ENCODE measurements at regions of chr7 and their contacts with region 1.

Region 1: DNA sequence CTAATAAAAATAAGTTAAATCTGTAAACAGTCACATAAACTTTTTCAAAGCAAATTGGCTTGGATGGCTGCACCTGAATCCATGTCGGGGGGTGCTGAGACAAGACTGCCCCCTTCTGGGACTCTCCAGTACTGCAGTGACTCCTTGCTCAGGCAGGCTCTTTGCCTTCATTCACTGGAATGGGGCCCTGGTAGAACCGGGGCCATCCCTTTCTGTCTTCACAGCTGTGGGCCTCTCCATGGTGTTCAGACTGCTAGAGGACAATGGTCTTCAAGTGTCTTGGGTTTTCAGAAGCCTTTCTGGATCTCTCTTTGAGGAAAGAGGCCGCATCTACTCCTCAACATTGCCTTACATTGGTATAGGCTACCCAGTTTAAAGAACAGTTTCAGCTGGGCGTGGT is 16.1 kb upstream of the IMPDH1 start:
- DNase-seq: peak; percentile 62 to 88 (median 74)
- ATAC-seq: peak; percentile 92
- H3K4me3 ChIP-seq: no peak overlapping the region
- H3K4me3 Mint-ChIP-seq: no peak overlapping the region
- H3K27ac ChIP-seq: no peak overlapping the region
- H3K27ac Mint-ChIP-seq: no peak overlapping the region
- H3K4me1 ChIP-seq: peaks cover 8% of the 10 kb centered on the region
- H3K4me1 Mint-ChIP-seq: no peaks in the 10 kb centered on the region
- H3K27me3 ChIP-seq: peaks cover 0 to 5% of the 10 kb centered on the region in 2 experiments
- H3K27me3 Mint-ChIP-seq: peaks cover 6% of the 10 kb centered on the region
- CTCF ChIP-seq: peak; percentile 94

Region 2: GRCh38 chr7:128387216-128388144 is 38.4 kb before region 1 on chr7:
- CTCF ChIA-PET with region 1: interaction called, 14 read pairs
- POLR2A ChIA-PET with region 1: no interaction called
- intact Hi-C with region 1: no loop called
- DNase-seq: peak; percentile 42 to 80 (median 58)
- ATAC-seq: peak; percentile 93
- H3K4me3 ChIP-seq: no peak overlapping the region
- H3K4me3 Mint-ChIP-seq: no peak overlapping the region
- H3K27ac ChIP-seq: no peak overlapping the region
- H3K27ac Mint-ChIP-seq: no peak overlapping the region
- H3K4me1 ChIP-seq: peaks cover 5% of the 10 kb centered on the region
- H3K4me1 Mint-ChIP-seq: no peaks in the 10 kb centered on the region
- H3K27me3 ChIP-seq: peaks cover 0 to 5% of the 10 kb centered on the region in 2 experiments
- H3K27me3 Mint-ChIP-seq: no peaks in the 10 kb centered on the region
- CTCF ChIP-seq: peak; percentile 82

Region 3: GRCh38 chr7:128398016-128398840 is 27.6 kb before region 1 on chr7:
- CTCF ChIA-PET with region 1: interaction called, 55 read pairs
- POLR2A ChIA-PET with region 1: interaction called, 3 read pairs
- intact Hi-C with region 1: loop called (anchors 1 kb)
- DNase-seq: peak in 12 of 14 experiments; percentile 26 to 63 (median 35)
- ATAC-seq: peak; percentile 68
- H3K4me3 ChIP-seq: no peak overlapping the region
- H3K4me3 Mint-ChIP-seq: no peak overlapping the region
- H3K27ac ChIP-seq: no peak overlapping the region
- H3K27ac Mint-ChIP-seq: no peak overlapping the region
- H3K4me1 ChIP-seq: peaks cover 2% of the 10 kb centered on the region
- H3K4me1 Mint-ChIP-seq: peaks cover 5% of the 10 kb centered on the region
- H3K27me3 ChIP-seq: no peaks in the 10 kb centered on the region
- H3K27me3 Mint-ChIP-seq: no peaks in the 10 kb centered on the region
- CTCF ChIP-seq: peak; percentile 98

Region 4: DNA sequence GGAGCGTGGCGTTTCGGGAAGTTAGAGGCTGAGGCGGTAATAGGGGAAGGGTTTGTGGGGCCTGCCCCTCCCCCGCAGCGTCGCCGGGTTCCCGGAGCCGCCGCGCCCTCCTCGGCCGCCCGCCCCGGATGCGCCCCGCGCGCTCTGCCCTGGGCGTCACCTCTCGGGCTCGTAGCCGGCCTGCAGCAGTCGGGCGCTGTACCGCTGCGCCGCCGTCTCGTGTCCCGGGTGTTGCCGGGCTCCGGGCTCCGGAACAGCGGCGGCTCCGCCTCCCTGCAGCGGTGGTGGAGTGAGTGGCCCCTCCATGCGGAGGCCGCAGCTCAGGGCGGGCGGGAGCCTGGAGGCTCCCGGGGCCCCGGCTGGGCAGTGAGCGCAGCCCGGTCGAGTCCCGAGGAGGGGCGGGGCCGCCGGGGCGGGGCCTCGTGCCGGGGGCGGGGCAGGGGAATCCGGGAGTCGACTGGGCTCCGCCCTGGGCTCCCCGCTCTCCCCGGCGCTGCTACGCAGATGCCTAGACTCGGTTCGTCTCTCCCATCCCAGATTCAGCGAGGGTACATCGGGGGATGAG is 16.2 kb before region 1 on chr7 and contains the start of gene IMPDH1:
- CTCF ChIA-PET with region 1: interaction called, 28 read pairs
- POLR2A ChIA-PET with region 1: interaction called, 3 read pairs
- intact Hi-C with region 1: no loop called
- DNase-seq: peak; percentile 65 to 91 (median 85)
- ATAC-seq: peak; percentile 72
- H3K4me3 ChIP-seq: peak within 1 kb of the TSS; percentile 95
- H3K4me3 Mint-ChIP-seq: peak within 1 kb of the TSS; percentile 92
- H3K27ac ChIP-seq: peak within 1 kb of the TSS; percentile 66 to 85
- H3K27ac Mint-ChIP-seq: peak within 1 kb of the TSS; percentile 86
- H3K4me1 ChIP-seq: peaks cover 52% of the 10 kb centered on the region
- H3K4me1 Mint-ChIP-seq: peaks cover 44% of the 10 kb centered on the region
- H3K27me3 ChIP-seq: no peaks in the 10 kb centered on the region
- H3K27me3 Mint-ChIP-seq: no peaks in the 10 kb centered on the region
- CTCF ChIP-seq: no peak
- total RNA-seq, gene IMPDH1: 26.5 to 27.0 TPM

Region 5: DNA sequence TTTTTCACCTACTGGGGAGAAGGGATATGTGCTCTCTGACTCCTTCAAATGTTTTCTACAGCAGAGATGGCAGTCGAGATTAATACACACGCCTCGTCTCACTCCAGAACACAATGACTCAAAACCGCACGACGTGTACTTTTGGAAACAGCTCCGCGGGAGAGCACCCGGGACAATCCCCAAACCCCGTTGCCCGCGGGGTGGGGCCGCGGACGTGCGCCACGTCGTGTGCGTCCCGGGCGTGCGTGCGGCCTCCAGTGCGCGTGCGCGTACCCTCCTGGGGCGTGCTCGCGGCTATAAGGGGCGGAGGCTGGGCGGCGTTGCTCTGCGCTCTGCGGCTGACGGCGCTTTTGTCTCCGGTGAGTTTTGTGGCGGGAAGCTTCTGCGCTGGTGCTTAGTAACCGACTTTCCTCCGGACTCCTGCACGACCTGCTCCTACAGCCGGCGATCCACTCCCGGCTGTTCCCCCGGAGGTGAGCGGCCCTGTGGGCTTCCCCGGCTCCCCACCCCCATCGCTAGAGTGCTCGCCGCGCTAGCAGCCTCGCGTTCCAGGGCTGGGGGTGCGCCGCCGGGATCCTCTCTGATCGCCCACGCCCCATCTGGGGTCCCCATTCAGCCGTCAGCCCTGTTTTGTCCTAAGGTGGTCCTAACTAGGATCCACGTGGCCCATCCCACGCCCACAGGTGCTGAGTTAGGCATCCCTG is 29.9 kb after region 1 on chr7 and contains the start of gene HILPDA:
- CTCF ChIA-PET with region 1: interaction called, 162 read pairs
- POLR2A ChIA-PET with region 1: interaction called, 16 read pairs
- intact Hi-C with region 1: loop called (anchors 1 kb)
- DNase-seq: peak; percentile 86 to 99 (median 92)
- ATAC-seq: peak; percentile 88
- H3K4me3 ChIP-seq: peak within 1 kb of the TSS; percentile 76
- H3K4me3 Mint-ChIP-seq: peak within 1 kb of the TSS; percentile 90
- H3K27ac ChIP-seq: peak within 1 kb of the TSS; percentile 62 to 67
- H3K27ac Mint-ChIP-seq: peak within 1 kb of the TSS; percentile 88
- H3K4me1 ChIP-seq: peaks cover 28% of the 10 kb centered on the region
- H3K4me1 Mint-ChIP-seq: peaks cover 22% of the 10 kb centered on the region
- H3K27me3 ChIP-seq: no peaks in the 10 kb centered on the region
- H3K27me3 Mint-ChIP-seq: no peaks in the 10 kb centered on the region
- CTCF ChIP-seq: no peak
- total RNA-seq, gene HILPDA: 1.7 TPM

Region 6: DNA sequence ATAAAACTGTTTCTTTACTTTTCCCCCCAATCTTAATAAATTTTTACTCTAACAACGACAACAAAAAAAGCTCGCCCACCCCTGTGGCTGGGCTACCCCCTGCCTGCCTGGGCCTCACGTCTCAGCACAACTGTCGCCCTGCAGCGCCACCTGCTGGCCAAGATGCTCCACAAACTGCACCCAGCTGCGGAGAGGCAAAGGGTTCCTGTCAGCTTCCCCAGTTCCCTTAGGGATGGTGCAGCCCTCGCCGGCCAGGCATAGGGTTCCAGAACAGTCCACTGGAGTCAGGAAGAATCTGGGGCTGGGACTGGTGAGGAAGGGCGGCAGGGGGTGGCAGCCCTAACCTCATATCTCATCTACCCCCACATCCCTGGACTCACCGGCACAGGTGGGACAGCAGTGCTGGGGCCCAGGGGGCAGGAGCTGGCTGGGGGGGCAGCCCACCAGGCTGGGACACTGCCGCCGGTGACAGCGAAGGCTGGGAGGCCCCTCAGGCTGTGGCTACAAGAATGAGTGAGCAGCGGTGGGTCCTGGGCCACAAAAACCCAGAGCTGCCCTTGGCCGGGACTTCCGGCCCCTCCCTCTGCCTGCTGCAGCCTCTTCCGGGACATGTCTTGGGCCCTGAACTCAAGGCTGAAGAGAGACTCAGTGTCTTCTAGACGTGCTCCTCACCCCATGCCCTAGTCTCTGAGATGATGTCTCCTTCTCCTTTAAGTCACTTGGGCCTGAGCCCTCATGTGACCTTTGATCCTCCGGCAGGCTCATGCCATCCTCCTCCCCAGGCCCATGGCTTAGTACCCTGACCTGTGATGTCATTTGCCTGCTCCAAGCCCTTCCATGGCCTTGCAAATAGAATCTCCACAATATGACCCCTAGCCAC is 458.0 kb after region 1 on chr7:
- CTCF ChIA-PET with region 1: no interaction called
- POLR2A ChIA-PET with region 1: no interaction called
- intact Hi-C with region 1: loop called in 1 of 2 experiments (anchors 2 kb)
- DNase-seq: peak; percentile 75 to 92 (median 84)
- ATAC-seq: peak; percentile 92
- H3K4me3 ChIP-seq: peak overlapping the region; percentile 36
- H3K4me3 Mint-ChIP-seq: no peak overlapping the region
- H3K27ac ChIP-seq: no peak overlapping the region
- H3K27ac Mint-ChIP-seq: no peak overlapping the region
- H3K4me1 ChIP-seq: peaks cover 6% of the 10 kb centered on the region
- H3K4me1 Mint-ChIP-seq: no peaks in the 10 kb centered on the region
- H3K27me3 ChIP-seq: peaks cover 7 to 15% of the 10 kb centered on the region in 2 experiments
- H3K27me3 Mint-ChIP-seq: peaks cover 5% of the 10 kb centered on the region
- CTCF ChIP-seq: peak; percentile 99